Endothelial cell of umbilical vein (primary cell): ENCODE measurements at regions of chr6 and their contacts with region 1.

Region 1: GRCh38 chr6:98957446-98957845 is 9.7 kb upstream of the FBXL4 start:
- DNase-seq: peak; percentile 95
- H3K4me3 ChIP-seq: no peak overlapping the region
- H3K27ac ChIP-seq: no peak overlapping the region
- H3K4me1 ChIP-seq: peaks cover 22% of the 10 kb centered on the region
- H3K27me3 ChIP-seq: peaks cover 16 to 33% of the 10 kb centered on the region in 2 experiments
- CTCF ChIP-seq: no peak
- POLR2A ChIP-seq: peak; percentile 48

Region 2: GRCh38 chr6:98834060-98835031 is 123.1 kb before region 1 on chr6 and contains the start of gene POU3F2:
- CTCF ChIA-PET with region 1: no interaction called
- POLR2A ChIA-PET with region 1: no interaction called
- dilution Hi-C with region 1: no loop called
- intact Hi-C with region 1: loop called (anchors 5 kb)
- DNase-seq: peak; percentile 90
- H3K4me3 ChIP-seq: peak within 1 kb of the TSS; percentile 8 to 40 (median 34)
- H3K27ac ChIP-seq: no peak within 1 kb of the TSS
- H3K4me1 ChIP-seq: peaks cover 9% of the 10 kb centered on the region
- H3K27me3 ChIP-seq: peaks cover 74 to 94% of the 10 kb centered on the region in 2 experiments
- CTCF ChIP-seq: no peak
- POLR2A ChIP-seq: no peak
- total RNA-seq, gene POU3F2: not detected in 2 replicates